ENCODE measurements at regions of chr17 and their contacts with region 1.

Region 1: GRCh38 chr17:62854098-62854680 is 46.1 kb upstream of the MARCHF10 start:
- DNase-seq: no peak
- ATAC-seq: no peak
- H3K4me3 ChIP-seq: no peak overlapping the region
- H3K27ac ChIP-seq: no peak overlapping the region
- H3K4me1 ChIP-seq: no peaks in the 10 kb centered on the region
- H3K27me3 ChIP-seq: no peaks in the 10 kb centered on the region
- CTCF ChIP-seq: no peak
- POLR2A ChIP-seq: no peak
- RAD21 ChIP-seq: no peak

Region 2: DNA sequence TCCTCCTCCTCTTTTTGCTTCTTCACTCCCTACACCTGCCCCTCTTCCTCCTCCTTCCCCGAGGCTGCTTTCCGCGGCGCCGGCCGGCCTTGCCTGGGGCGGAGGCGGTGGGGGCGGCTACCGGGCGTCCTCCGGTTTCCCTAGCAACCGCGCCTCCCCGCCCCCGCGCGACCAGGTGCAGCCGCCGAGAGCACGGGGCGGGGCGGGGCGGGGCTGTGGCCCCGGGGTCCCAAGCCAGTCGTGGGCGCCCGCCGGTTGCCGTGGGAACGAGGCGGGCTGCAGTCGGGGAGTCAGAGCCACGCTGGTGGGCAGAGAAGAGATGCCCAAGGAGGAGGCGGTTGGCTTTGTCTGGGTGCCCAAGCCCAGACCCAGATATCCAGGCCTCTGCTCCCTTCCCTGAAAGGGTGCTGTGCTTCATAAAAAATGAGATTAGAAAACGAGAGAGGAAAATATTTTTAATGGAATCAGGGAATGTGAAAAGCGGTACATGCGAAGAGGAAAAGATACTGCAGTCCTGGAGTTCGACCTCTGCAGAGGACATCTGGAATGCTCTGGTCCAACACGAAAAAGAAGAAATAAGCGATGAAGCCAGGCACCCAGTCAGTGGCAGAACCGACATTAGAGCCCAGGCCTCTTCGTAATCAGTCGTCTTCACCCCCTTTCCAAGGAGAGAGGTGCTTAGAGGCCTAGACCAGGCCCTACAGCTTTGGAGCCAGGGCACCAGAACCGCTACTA is 45.8 kb before region 1 on chr17 and contains the start of gene MARCHF10:
- CTCF ChIA-PET with region 1: no interaction called
- POLR2A ChIA-PET with region 1: no interaction called
- dilution Hi-C with region 1: no loop called
- in situ Hi-C with region 1: no loop called
- intact Hi-C with region 1: no loop called
- DNase-seq: no peak
- ATAC-seq: no peak; the same call in 1 of the 2 replicates
- H3K4me3 ChIP-seq: no peak within 1 kb of the TSS
- H3K27ac ChIP-seq: no peak within 1 kb of the TSS; the same call in 1 of the 2 replicates
- H3K4me1 ChIP-seq: peaks cover 10% of the 10 kb centered on the region; the same call in 1 of the 2 replicates
- H3K27me3 ChIP-seq: no peaks in the 10 kb centered on the region
- CTCF ChIP-seq: no peak
- POLR2A ChIP-seq: no peak
- RAD21 ChIP-seq: no peak
- total RNA-seq, gene MARCHF10: under 0.01 and 0.18 TPM in 2 replicates

Region 3: DNA sequence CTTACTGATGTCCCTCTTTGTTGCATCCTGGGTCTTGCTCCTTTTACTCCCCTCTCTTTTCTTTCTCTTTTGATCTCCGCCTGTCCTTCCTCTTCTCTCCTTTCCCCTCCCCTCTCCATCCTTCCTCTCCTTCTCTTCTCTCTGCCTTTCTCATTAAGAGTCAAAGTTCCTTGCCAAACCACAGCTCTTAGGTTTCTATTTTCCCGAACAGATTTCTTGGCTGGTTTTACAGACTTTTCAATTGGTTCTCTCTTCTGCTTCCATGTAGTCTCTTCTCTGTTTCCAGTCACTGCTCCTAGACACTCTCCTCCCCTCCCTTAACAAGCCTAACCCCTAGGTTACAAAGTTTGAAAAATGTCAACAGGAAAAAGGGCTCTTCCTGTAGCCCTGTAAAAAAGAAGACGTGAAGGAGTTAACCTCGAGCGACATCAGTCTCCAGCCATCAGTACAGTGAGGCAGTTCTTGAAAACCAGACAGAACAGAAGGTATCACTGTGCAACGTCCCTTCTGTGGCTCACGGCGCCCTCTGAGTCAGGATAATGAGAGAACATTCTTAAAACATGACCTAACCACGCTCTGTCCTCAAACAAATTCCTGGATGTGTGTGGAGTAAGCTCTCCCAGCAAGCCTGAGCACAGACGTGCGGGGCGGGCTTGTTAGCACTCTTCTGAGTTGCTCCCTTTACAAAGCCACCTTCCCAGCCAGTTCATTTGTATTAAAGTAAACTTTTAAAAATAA is 34.5 kb before region 1 on chr17:
- CTCF ChIA-PET with region 1: no interaction called
- POLR2A ChIA-PET with region 1: no interaction called
- dilution Hi-C with region 1: no loop called
- in situ Hi-C with region 1: no loop called
- intact Hi-C with region 1: no loop called
- DNase-seq: peak; percentile 99
- ATAC-seq: peak; percentile 94
- H3K4me3 ChIP-seq: peak overlapping the region; percentile 24; the same call in 1 of the 2 replicates
- H3K27ac ChIP-seq: peak overlapping the region; percentile 70
- H3K4me1 ChIP-seq: peaks cover 25% of the 10 kb centered on the region
- H3K27me3 ChIP-seq: no peaks in the 10 kb centered on the region
- CTCF ChIP-seq: no peak
- POLR2A ChIP-seq: peak; percentile 82
- RAD21 ChIP-seq: peak; percentile 47

Region 4: GRCh38 chr17:62833395-62833794 is 20.8 kb before region 1 on chr17:
- CTCF ChIA-PET with region 1: no interaction called
- POLR2A ChIA-PET with region 1: no interaction called
- dilution Hi-C with region 1: no loop called
- in situ Hi-C with region 1: no loop called
- intact Hi-C with region 1: loop called (anchors 1 kb)
- DNase-seq: no peak
- ATAC-seq: no peak
- H3K4me3 ChIP-seq: no peak overlapping the region
- H3K27ac ChIP-seq: no peak overlapping the region
- H3K4me1 ChIP-seq: no peaks in the 10 kb centered on the region
- H3K27me3 ChIP-seq: no peaks in the 10 kb centered on the region
- CTCF ChIP-seq: no peak
- POLR2A ChIP-seq: no peak
- RAD21 ChIP-seq: no peak